Activated CD4-positive, alpha-beta T cell treated with anti-CD3 and anti-CD28 coated beads for 36 hours (primary cell): ENCODE measurements at regions of chr1 and their contacts with region 1.

Region 1: DNA sequence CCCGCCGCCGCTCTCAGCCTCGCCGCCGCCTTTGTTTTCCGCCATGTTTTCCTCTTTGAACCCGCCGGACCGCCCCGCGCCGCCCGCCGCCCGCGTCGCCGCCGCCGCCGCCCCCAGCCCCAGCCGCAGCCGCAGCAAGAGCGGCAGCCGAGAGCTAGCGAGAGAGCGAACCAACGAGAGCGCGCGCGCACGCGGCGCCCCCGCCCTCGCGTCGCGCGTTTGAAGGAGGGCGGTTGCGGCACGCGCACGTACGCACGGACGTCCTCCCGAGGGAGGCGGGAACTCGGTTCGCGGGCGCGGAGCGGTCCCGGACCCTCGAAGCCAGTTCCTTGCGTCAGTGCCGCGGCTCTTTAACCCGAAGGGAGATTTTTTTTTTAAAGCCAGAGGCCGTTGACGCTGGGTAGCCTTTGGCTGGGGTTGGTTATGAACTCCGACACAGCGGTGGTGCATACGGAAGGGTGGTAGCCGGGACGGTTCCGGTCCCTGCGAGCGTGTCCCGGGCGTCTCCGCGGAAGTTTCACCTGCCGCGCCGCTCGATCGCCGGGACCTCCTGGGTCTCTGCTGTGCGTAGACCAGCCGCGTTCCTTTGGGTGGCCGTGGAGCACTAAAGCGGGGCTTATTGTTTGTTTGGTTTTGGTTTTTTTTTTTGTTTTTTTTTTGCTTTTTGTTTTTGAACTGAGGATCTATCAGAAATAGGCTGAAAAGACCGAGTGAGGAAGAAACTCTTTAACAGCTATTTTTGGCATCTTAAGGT is at the start of gene TRIM33:
- DNase-seq: peak; percentile 95
- ATAC-seq: peak; percentile 77
- H3K4me3 Mint-ChIP-seq: peak within 1 kb of the TSS; percentile 81
- H3K27ac Mint-ChIP-seq: peak within 1 kb of the TSS; percentile 98
- H3K4me1 Mint-ChIP-seq: peaks cover 43% of the 10 kb centered on the region
- H3K27me3 Mint-ChIP-seq: no peaks in the 10 kb centered on the region
- total RNA-seq, gene TRIM33: 32.5 to 41.6 TPM

Region 2: GRCh38 chr1:113759333-113760101 is 751.7 kb before region 1 on chr1 and contains the start of gene PHTF1:
- CTCF ChIA-PET with region 1: no interaction called
- POLR2A ChIA-PET with region 1: no interaction called
- intact Hi-C with region 1: loop called in 1 of 2 experiments (anchors 1 kb)
- DNase-seq: peak; percentile 77
- ATAC-seq: peak; percentile 81
- H3K4me3 Mint-ChIP-seq: peak within 1 kb of the TSS; percentile 81
- H3K27ac Mint-ChIP-seq: peak within 1 kb of the TSS; percentile 94
- H3K4me1 Mint-ChIP-seq: peaks cover 13% of the 10 kb centered on the region
- H3K27me3 Mint-ChIP-seq: no peaks in the 10 kb centered on the region
- total RNA-seq, gene PHTF1: 11.3 to 12.2 TPM

Region 3: DNA sequence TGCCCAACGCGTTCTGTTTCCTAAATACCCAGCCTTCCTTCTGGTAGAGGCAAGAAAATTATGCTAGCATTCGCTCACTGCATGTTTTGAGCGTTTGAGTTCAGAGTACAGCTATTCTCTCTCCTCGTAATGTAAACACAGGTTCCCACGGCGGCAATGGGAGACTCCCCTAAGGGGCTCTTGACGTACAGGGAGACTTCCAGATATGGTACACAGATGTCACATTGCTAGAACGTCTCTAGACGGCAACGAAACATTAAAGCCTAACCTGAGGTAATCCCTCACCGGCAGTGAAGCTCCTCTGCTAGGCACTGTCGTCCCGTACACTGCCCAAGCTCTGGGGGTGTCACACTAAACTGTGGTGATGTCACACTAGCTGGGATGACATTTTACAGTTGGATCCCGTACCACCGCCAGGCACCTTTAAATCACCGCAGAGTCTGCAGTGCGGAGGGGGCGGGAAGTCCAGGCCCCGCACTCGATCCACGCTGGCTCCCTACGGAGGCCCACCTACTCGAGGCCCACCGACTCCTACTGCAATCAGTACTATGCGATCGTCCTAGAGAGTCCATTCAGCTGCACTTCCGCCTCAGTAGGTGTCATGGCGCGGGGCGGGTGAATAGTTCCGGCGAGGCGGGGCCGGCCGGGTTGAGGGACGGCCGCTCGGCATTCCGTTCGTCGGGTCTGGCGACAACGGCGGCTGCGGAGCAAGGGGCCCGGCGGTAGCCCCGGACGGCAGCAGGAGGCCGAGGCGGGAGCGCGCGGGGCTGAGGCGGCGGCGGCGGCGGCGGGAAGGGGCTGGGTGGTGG is 582.1 kb before region 1 on chr1 and contains the start of gene HIPK1:
- CTCF ChIA-PET with region 1: no interaction called
- POLR2A ChIA-PET with region 1: no interaction called
- intact Hi-C with region 1: loop called in 1 of 2 experiments (anchors 1 kb)
- DNase-seq: peak; percentile 96
- ATAC-seq: peak; percentile 66
- H3K4me3 Mint-ChIP-seq: peak within 1 kb of the TSS; percentile 84
- H3K27ac Mint-ChIP-seq: peak within 1 kb of the TSS; percentile 99
- H3K4me1 Mint-ChIP-seq: peaks cover 41% of the 10 kb centered on the region
- H3K27me3 Mint-ChIP-seq: no peaks in the 10 kb centered on the region
- total RNA-seq, gene HIPK1: 42.2 to 50.3 TPM

Region 4: GRCh38 chr1:114490274-114490693 is 20.9 kb before region 1 on chr1:
- CTCF ChIA-PET with region 1: no interaction called
- POLR2A ChIA-PET with region 1: no interaction called
- intact Hi-C with region 1: loop called in 1 of 2 experiments (anchors 2 kb)
- DNase-seq: no peak
- ATAC-seq: no peak
- H3K4me3 Mint-ChIP-seq: no peak overlapping the region
- H3K27ac Mint-ChIP-seq: no peak overlapping the region
- H3K4me1 Mint-ChIP-seq: peaks cover 47% of the 10 kb centered on the region
- H3K27me3 Mint-ChIP-seq: no peaks in the 10 kb centered on the region

Region 5: DNA sequence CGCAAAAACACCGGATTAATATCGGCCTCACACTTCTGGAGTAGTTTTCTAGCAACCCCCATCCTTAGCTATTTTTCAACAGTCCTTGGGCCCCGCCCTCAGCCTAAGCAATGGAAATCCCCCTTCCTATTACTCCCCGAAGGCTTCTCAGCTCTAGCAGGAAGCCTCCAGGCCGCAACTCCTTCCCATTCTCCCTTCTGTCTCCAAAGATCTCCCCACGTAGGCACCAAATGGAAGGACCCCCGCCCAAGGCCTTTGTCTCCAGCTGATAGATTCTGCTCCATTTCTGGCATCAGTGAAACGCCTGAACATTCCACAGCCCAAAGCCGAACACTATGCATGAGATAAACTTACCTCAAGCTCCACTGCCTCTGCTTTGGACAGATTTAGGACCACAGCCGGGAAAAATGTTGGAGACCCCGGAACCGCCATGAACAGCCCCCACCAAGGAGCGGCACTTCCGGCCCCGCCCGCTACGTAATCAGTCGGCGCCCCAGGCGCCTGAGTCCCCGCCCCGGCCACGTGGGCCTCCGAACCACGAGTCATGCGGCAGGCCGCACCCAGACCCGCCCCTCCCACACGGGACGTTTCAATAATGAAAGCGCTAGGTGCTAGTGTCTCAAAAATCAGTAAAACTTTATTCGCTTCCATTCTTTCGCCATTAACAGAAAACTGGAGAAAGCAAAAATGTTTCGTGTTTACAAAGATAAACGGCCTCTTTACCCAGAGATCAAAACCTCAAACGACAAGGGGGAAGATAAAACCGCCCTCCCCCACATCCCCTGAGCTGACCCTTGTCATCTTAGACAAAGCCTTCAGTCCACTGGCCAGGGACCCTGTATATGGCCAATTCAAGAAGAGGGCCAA is 205.3 kb after region 1 on chr1 and contains the start of gene NRAS:
- CTCF ChIA-PET with region 1: no interaction called
- POLR2A ChIA-PET with region 1: no interaction called
- intact Hi-C with region 1: loop called in 1 of 2 experiments (anchors 1 kb)
- DNase-seq: peak; percentile 97
- ATAC-seq: peak; percentile 91
- H3K4me3 Mint-ChIP-seq: peak within 1 kb of the TSS; percentile 95
- H3K27ac Mint-ChIP-seq: peak within 1 kb of the TSS; percentile 97
- H3K4me1 Mint-ChIP-seq: peaks cover 30% of the 10 kb centered on the region
- H3K27me3 Mint-ChIP-seq: no peaks in the 10 kb centered on the region
- total RNA-seq, gene NRAS: 53.0 to 55.0 TPM